Pancreas (tissue), 10 donors: ENCODE measurements at regions of chr19 and their contacts with region 1.

Region 1: GRCh38 chr19:10565567-10566407 is at the start of gene KRI1:
- DNase-seq: peak; percentile 98 to 99 (median 99)
- ATAC-seq: peak; percentile 80 to 86 (median 82)
- H3K4me3 ChIP-seq: peak within 1 kb of the TSS; percentile 62 to 92 (median 74)
- H3K27ac ChIP-seq: peak within 1 kb of the TSS; percentile 59 to 73 (median 65)
- H3K4me1 ChIP-seq: peaks cover 0 to 13% (median 6%) of the 10 kb centered on the region in 3 donors
- H3K27me3 ChIP-seq: no peaks in the 10 kb centered on the region
- CTCF ChIP-seq: peak in 2 of 4 donors; percentile 14 to 29
- total RNA-seq, gene KRI1: 8.0 to 15.8 (median 13.5) TPM

Region 2: GRCh38 chr19:10010247-10010691 is 555.5 kb before region 1 on chr19 and contains the start of gene COL5A3:
- intact Hi-C with region 1: no loop called
- DNase-seq: peak in 1 of 6 donors; percentile 18
- ATAC-seq: peak in 2 of 4 donors; percentile 33 to 49
- H3K4me3 ChIP-seq: peak within 1 kb of the TSS in 2 of 4 donors; percentile 24 to 30
- H3K27ac ChIP-seq: no peak within 1 kb of the TSS
- H3K4me1 ChIP-seq: peaks cover 0 to 7% (median 6%) of the 10 kb centered on the region in 3 donors
- H3K27me3 ChIP-seq: peaks cover 0 to 17% (median 2%) of the 10 kb centered on the region in 4 donors
- CTCF ChIP-seq: no peak
- total RNA-seq, gene COL5A3: 1.0 to 4.0 (median 2.0) TPM

Region 3: DNA sequence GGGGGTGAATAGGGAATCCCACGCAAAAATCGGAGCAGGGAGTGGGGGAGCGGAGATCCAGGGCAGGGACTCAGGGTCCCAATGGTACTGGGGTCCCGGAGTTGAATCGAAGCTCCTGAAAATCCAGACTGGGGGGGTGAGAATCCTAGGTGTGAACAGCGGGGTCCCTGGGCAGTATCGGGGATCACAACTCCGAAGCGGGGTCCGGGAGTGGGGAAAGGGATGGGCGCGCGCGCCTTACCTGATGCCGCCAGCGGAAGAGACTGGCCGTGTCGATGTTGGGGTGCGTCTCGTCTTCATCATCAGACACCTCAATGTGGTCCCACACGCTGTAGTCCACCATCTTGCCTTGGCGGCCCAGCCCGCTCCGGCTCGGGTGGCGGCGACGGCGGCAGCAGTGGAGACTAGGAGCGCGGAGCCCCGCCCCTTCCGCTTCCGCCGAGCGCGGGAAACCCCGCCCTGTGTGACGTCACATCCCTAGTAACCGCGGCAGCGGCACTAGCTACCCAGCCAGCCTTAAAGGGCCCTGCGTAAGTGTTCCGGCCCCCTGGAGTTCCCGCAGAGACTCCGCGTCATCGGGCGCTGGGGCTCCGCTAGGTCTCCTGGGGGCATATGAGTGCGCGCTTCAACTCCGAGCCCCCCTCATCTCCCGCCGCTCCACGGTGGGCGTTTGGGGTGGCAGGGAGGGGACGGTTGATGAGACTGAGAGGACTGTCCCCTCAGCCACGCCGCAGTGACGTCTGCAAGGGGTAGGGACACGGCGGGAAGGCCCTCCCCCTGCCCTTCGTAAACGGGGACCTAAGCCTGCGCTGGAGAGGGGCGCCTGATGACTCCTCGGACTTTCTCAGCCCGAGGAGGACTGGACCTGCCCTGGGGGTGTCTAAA is 162.4 kb before region 1 on chr19 and contains the start of gene CDC37:
- intact Hi-C with region 1: loop called in 1 of 3 experiments (anchors 10 kb)
- DNase-seq: peak; percentile 93 to 99 (median 98)
- ATAC-seq: peak; percentile 93 to 97 (median 96)
- H3K4me3 ChIP-seq: peak within 1 kb of the TSS; percentile 82 to 96 (median 89)
- H3K27ac ChIP-seq: peak within 1 kb of the TSS; percentile 24 to 70 (median 48)
- H3K4me1 ChIP-seq: peaks cover 3 to 27% (median 10%) of the 10 kb centered on the region in 3 donors
- H3K27me3 ChIP-seq: no peaks in the 10 kb centered on the region
- CTCF ChIP-seq: no peak
- total RNA-seq, gene CDC37: 41.3 to 61.0 (median 48.5) TPM

Region 4: GRCh38 chr19:10499551-10500246 is 66.1 kb before region 1 on chr19:
- intact Hi-C with region 1: loop called in 1 of 3 experiments (anchors 10 kb)
- DNase-seq: peak in 1 of 6 donors; percentile 73
- ATAC-seq: no peak
- H3K4me3 ChIP-seq: no peak overlapping the region
- H3K27ac ChIP-seq: peak overlapping the region in 1 of 4 donors; percentile 7
- H3K4me1 ChIP-seq: peaks cover 0 to 5% (median 5%) of the 10 kb centered on the region in 3 donors
- H3K27me3 ChIP-seq: no peaks in the 10 kb centered on the region
- CTCF ChIP-seq: no peak

Region 5: DNA sequence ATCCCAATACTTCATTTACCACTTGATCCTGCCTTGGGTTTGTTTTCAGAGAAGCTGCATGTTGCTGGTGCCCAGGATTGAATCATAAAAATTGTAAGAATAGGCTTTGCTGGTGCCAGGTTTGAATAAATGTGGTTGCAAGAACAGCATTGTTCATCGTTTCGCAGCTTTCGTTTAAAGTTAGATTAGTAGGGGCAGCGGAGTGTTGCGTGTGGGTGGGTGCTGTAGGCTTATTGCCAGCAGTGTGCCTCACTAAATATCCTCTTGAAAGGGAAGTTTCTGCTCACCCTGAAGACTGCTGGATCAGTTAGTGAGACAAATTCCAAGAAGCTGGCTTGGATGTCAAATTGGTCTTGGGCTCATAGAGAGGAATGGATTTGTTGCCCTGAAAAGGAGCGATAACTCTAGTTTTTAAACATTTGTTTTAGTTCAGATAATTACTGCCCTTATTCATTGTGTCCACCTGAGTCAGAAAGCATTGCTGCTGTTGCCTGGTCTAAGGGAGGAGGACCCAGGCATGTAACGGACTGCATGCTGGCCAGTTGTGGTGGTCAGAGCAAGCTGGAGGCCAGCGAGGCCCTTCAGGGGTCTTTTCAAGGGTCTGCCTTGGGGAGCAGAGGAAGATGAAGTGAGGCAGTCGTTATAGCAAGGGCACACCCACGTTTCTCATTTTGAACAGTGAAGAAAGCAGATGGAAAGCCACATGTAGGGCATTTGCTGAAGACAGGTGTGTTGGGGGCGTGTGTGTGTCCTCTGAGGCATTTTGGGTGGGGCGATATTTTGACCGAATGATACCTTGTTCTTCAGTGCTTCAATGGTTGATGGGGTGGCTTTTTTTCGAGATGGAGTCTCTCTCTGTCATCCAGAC is 96.8 kb after region 1 on chr19:
- intact Hi-C with region 1: no loop called
- DNase-seq: no peak
- ATAC-seq: no peak
- H3K4me3 ChIP-seq: no peak overlapping the region
- H3K27ac ChIP-seq: no peak overlapping the region
- H3K4me1 ChIP-seq: peaks cover 0 to 7% (median 0%) of the 10 kb centered on the region in 3 donors
- H3K27me3 ChIP-seq: no peaks in the 10 kb centered on the region
- CTCF ChIP-seq: no peak

Region 6: GRCh38 chr19:10724551-10725071 is 158.8 kb after region 1 on chr19:
- intact Hi-C with region 1: no loop called
- DNase-seq: no peak
- ATAC-seq: no peak
- H3K4me3 ChIP-seq: no peak overlapping the region
- H3K27ac ChIP-seq: no peak overlapping the region
- H3K4me1 ChIP-seq: peaks cover 0 to 10% (median 8%) of the 10 kb centered on the region in 3 donors
- H3K27me3 ChIP-seq: no peaks in the 10 kb centered on the region
- CTCF ChIP-seq: no peak